Activated T-helper 2 cell treated with anti-CD3 and anti-CD28 coated beads, Interferon-gamma antibody, Interleukin-2, Interleukin-4, amounts not matched to agents 10 μg/mL and 5 μg/mL and 100 μg/mL, durations not matched to agents 14 hours and 24 hours and 36 hours (primary cell): ENCODE measurements at regions of chr9 and their contacts with region 1.

Region 1: DNA sequence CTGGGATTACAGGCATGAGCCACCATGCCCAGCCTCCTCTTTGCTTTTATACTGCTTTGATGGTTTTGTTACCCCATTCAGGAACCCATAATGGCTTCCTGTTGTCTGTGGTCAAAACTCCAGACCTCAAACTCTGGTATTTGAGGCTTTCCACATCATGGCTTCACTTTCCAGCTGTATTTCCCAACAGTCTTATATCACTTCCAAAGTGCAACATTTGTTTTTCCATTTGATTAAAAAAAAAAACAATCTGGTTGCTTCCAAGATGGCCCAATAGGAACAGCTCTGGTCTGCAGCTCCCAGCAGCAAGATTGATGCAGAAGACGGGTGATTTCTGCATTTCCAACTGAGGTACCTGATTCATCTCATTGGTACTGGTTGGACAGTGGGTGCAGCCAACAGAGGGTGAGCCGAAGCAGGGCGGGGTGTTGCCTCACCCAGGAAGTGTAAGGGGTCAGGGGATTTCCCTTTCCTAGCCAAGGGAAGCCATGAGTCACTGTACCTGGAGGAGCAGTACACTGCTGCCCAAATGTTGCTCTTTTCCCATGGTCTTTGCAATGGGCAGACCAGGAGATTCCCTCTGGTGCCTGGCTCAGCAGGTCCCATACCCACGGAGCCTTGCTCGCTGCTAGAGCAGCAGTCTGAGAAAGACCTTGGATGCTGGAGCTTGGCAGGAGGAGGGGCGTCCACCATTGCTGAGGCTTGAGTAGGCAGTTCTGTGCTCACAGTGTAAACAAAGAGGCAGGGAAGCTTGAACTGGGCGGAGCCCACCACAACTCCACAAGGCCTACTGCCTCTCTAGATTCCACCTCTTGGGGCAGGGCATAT is 458.4 kb downstream of the KDM4C start:
- DNase-seq: peak; percentile 47
- H3K4me3 Mint-ChIP-seq: no peak overlapping the region
- H3K27ac Mint-ChIP-seq: peak overlapping the region; percentile 53
- H3K4me1 Mint-ChIP-seq: peaks cover 29% of the 10 kb centered on the region
- H3K27me3 Mint-ChIP-seq: peaks cover 20% of the 10 kb centered on the region

Region 2: GRCh38 chr9:7055201-7055903 is 160.9 kb before region 1 on chr9:
- intact Hi-C with region 1: loop called (anchors 10 kb)
- DNase-seq: no peak
- H3K4me3 Mint-ChIP-seq: no peak overlapping the region
- H3K27ac Mint-ChIP-seq: no peak overlapping the region
- H3K4me1 Mint-ChIP-seq: peaks cover 29% of the 10 kb centered on the region
- H3K27me3 Mint-ChIP-seq: no peaks in the 10 kb centered on the region